Dorsolateral prefrontal cortex (tissue), 120 donors: ENCODE measurements at regions of chr18 and their contacts with region 1.

Region 1: DNA sequence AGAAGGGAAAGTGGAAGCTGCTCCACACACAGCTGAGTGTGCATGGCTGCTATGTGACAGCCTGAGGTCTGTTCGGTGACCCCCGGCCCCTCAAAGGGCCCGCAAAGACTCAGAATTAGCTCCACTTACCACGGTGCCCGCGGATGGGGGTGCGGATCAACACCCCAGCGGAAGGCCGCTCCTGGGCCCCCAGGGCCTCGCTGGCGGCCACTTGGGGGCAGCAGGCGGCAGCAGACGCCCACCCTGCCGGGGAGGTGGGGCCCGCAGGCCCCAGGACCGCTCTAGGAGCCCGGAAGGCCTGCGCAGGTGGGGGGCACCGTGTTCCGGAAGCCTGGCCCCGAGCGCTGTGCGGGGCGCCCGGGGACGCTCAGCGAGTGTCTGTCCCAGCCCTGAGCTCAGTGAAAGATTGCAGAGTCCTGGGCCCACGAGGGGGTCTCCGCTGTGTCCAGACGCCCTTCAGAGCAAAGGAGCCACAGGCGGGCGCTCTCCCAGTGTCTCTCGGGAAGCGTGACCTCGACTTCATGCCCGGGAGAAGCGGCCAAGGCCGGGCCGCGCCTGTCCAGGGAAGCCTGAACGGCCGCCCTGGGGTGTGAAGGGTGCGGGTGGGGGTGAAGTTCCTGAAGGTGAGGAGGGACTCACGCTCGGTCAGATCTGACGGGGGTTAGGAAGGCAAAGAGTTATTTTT is 118.7 kb downstream of the VAPA start:
- DNase-seq: peak in 1 of 10 donors; percentile 67
- H3K4me3 ChIP-seq: peak overlapping the region in 58 of 59 donors; percentile 17 to 63 (median 42)
- H3K27ac ChIP-seq: peak overlapping the region in 32 of 59 donors; percentile 4 to 79 (median 43)
- H3K27me3 ChIP-seq: peaks cover 0 to 7% (median 0%) of the 10 kb centered on the region in 45 donors
- CTCF ChIP-seq: peak; percentile 30 to 82 (median 62)

Region 2: DNA sequence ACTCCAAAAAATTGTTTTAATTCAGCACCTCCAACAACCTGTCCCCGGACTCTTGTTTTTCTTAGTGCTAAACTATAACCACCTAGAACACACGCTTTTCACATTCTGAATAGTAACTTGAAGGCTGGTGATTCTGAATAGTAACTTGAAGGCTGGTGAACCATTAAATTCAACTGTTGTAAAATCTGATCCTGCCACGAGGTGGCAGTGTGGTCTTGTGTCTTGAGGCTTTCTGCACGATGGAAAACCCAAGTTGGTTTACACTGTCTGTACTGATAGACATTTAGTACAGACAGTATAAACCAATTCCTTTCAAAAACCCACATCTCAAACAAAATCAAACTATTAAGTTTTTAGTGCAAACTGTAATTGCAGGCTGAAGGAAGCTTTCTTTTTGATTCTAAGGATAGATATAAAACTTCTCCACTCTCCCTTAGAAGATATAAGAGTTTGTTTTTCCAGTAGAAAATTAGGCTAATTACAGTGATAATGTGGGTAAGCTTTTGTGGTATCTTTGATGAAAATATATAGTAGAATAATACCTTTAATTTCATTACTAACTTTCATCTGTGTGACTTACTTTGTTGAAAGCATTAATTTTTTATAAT is 61.1 kb before region 1 on chr18:
- intact Hi-C with region 1: loop called in 1 of 2 experiments (anchors 10 kb)
- DNase-seq: peak in 7 of 10 donors; percentile 56 to 90 (median 76)
- H3K4me3 ChIP-seq: no peak overlapping the region
- H3K27ac ChIP-seq: no peak overlapping the region
- H3K27me3 ChIP-seq: no peaks in the 10 kb centered on the region
- CTCF ChIP-seq: peak; percentile 80 to 98 (median 90)